ENCODE measurements at regions of chr7 and their contacts with region 1.

Region 1: DNA sequence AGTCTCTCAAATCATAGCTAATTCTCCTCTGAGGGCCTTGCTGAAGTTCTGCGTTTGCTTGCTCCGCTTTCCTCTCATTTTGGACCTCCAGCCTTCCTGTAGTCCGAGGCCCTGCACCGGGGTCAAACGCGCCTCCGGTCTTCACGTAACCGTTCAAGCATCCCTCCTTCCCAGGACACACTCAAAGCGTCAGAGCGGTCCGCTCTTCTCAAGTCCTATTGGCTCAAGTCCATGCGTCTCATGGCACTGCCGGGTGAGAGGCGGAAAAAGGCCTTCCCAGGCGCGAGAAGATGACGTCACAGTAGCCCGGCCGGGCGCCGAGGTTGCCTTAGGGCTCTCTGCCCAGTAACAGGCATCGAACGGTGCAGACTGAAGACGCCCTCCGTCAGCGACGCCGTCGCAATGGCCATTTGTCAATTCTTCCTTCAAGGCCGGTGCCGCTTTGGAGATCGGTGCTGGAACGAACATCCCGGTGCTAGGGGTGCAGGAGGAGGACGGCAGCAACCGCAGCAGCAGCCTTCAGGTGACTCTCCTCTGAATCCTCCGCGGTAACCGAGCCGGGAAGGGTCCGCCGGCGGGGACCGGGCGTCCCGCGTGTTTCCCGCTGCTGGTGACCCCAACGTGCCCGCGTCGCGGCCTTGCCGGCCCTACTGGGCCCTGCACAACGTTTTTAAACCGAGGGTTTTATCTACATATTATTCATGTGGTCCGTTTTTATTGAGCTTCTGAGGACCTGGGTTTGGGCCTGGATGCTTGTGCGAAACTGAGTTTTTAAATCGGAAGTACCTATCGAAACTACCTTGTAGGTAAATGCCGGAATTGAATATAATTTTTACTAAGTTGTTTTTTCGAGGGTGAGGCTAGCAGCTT is at the start of gene NUP42:
- DNase-seq: peak; percentile 97
- H3K4me3 Mint-ChIP-seq: peak within 1 kb of the TSS; percentile 89
- H3K27ac Mint-ChIP-seq: peak within 1 kb of the TSS; percentile 98
- H3K4me1 Mint-ChIP-seq: peaks cover 33% of the 10 kb centered on the region
- H3K27me3 Mint-ChIP-seq: peaks cover 7% of the 10 kb centered on the region
- total RNA-seq, gene NUP42: 52.2 and 54.0 TPM in 2 replicates

Region 2: DNA sequence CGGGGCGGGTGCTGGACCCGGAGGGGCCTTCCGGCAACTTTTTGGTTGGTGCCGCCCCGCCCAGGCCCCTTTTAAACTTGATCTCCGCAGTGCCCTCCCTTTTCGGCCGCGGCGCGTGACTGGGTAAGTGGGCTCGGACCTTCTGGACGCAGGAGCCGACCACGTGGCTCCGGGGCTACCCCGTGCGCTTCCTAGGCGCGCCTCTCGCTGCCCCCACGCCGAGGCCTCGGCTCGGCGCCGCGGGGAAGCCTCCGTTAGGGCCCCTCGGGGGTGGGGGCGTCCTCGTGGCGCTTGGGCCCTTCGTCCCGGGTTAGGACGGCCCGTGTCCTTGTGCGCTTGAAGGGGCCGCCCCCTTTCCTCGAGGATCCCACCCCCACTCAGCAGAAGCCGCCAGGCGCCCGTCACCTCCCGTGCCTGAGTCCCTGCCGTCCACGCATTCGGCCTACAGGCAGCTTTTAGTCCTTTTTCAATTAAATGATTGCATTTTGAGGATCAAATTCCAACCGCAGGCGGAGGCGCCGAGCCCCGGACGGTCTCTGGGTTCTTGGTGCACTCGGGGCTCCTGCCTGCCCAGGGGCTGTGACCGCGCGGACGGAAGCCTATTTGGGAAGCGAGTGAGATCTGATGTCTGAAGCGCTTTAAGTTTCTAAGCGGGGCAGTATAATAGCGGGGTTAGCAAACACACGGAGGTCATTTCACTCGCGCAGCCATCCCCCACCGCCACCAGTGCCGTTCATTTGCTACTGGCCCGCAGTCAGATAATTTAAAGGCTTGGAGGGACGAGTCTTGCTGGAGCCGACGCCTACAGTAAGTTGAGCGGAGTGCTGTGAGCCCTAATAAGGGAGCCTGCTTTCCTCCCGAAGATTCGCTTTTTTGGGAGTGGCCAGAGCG is 327.5 kb before region 1 on chr7:
- intact Hi-C with region 1: loop called (anchors 10 kb)
- DNase-seq: peak; percentile 74
- H3K4me3 Mint-ChIP-seq: peak overlapping the region; percentile 95
- H3K27ac Mint-ChIP-seq: peak overlapping the region; percentile 94
- H3K4me1 Mint-ChIP-seq: peaks cover 31% of the 10 kb centered on the region
- H3K27me3 Mint-ChIP-seq: no peaks in the 10 kb centered on the region

Region 3: GRCh38 chr7:23093546-23093945 is 88.4 kb before region 1 on chr7:
- intact Hi-C with region 1: loop called (anchors 5 kb)
- DNase-seq: no peak
- H3K4me3 Mint-ChIP-seq: no peak overlapping the region
- H3K27ac Mint-ChIP-seq: no peak overlapping the region
- H3K4me1 Mint-ChIP-seq: no peaks in the 10 kb centered on the region
- H3K27me3 Mint-ChIP-seq: peaks cover 26% of the 10 kb centered on the region

Region 4: DNA sequence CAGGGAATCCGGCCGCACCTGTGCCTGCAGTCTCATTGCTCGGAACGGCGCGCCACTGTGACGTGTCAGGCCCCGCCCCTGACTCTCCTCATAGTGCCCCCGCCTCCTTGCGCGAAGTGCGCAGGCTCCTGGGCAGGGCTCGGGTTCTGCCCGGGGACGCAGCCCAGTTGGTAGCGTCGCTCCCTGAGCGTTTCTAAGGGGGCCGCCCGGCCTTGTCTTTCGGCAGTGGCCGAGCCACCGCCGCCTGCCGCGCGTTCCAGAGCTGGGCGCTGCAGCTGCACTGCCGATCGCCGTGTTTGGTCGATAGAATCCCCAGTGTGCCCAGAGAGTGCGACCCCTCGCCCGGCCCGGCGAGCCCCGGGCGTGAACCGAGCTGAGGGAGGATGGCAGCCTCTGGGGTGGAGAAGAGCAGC is 76.3 kb before region 1 on chr7 and contains the start of gene KLHL7:
- intact Hi-C with region 1: loop called (anchors 1 kb)
- DNase-seq: peak; percentile 94
- H3K4me3 Mint-ChIP-seq: peak within 1 kb of the TSS; percentile 93
- H3K27ac Mint-ChIP-seq: peak within 1 kb of the TSS; percentile 93
- H3K4me1 Mint-ChIP-seq: peaks cover 30% of the 10 kb centered on the region
- H3K27me3 Mint-ChIP-seq: no peaks in the 10 kb centered on the region
- total RNA-seq, gene KLHL7: 20.2 and 21.6 TPM in 2 replicates

Region 5: DNA sequence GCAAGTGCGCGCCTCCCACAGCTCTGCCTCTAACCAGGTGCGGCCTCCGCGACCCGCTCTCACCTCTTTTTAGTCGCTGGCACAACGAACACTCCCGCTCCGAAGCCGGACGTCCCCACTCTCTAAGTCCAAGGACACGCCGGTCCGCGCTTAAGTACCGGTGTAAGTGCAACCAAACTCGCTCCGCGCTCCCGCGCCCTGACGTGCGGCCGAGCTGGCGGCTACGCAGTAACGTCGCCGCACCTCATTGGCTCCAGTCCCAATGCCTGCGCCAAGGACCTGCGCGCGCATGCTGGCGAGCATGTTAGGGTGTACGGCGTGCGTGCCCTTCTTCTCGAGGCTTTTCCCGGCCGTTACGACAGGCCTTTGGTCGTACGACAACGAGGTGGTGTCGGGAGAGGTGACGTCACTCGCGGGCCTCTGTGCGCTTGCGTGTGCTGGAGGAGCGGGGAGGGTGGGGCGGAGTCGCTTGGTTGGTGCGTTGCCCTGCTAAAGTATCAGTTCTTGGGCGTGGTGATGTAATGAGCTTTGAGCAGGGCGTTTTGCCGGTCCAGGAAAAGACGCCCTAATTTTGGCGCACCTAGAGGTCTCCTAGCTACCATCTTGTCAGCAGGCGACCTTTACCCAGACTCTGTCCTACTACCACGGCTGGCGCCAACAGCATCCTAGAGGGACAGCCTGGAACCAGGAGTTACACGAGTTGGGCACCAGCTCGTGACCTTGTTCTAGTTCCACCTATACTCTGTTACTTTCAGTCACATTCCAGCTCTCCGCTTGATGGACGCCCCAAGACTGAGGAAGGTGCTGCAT is 1943.4 kb after region 1 on chr7 and contains the start of gene CYCS:
- intact Hi-C with region 1: loop called (anchors 10 kb)
- DNase-seq: peak; percentile 99
- H3K4me3 Mint-ChIP-seq: peak within 1 kb of the TSS; percentile 94
- H3K27ac Mint-ChIP-seq: peak within 1 kb of the TSS; percentile 97
- H3K4me1 Mint-ChIP-seq: peaks cover 24% of the 10 kb centered on the region
- H3K27me3 Mint-ChIP-seq: no peaks in the 10 kb centered on the region
- total RNA-seq, gene CYCS: 235 and 251 TPM in 2 replicates

Measured in activated T-helper 2 cell treated with anti-CD3 and anti-CD28 coated beads, Interferon-gamma antibody, Interleukin-2, Interleukin-4, amounts not matched to agents 10 μg/mL and 5 μg/mL and 100 μg/mL, durations not matched to agents 14 hours and 24 hours and 36 hours (primary cell).